ENCODE measurements at regions of chr11 and their contacts with region 1.

Region 1: GRCh38 chr11:126211235-126212088 is at the starts of genes FAM118B and RPUSD4:
- DNase-seq: peak; percentile 99
- ATAC-seq: peak; percentile 99
- total RNA-seq, gene FAM118B: 22.2 TPM
- total RNA-seq, gene RPUSD4: 40.7 TPM

Region 2: GRCh38 chr11:126268708-126269579 is 57.5 kb after region 1 on chr11 and contains the starts of genes FOXRED1 and SRPRA:
- intact Hi-C with region 1: loop called (anchors 5 kb)
- DNase-seq: peak; percentile 100
- ATAC-seq: peak; percentile 100
- total RNA-seq, gene FOXRED1: 30.3 TPM
- total RNA-seq, gene SRPRA: 57.4 TPM